GM18951 (cell line): ENCODE measurements at regions of chr9 and their contacts with region 1.

Region 1: DNA sequence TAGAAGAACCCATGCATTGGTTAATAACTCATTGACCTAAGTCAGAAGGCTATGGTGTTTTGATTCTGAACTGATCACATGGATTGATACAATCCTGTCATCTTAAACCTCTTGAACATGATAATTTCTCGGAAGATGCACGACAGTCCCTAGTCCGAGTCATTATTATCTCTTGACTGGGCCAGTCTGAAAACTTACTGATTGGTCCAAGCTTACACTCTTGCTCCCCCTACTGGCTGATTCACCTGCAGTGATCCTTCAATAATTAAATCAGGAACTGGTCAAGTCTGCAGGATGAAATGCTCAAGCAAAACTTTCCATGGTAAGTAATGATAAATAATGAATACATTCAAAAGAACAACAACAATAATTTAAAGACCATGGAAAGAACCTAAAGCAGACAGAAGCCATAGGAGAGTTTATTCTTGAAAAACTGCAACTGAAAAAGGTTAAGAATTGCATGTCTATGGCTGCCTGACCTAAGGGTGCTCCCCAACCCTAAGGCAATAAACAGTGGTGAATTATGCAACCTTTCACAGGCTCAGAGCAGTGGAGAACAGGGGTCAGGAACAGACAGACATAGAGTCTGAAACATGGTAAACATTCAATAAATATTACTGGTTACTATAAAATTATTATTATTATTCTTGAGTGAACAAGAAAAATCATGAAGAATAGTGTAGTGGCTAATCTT is 79.3 kb downstream of the BRINP1 start:
- POLR2A ChIP-seq: no peak

Region 2: DNA sequence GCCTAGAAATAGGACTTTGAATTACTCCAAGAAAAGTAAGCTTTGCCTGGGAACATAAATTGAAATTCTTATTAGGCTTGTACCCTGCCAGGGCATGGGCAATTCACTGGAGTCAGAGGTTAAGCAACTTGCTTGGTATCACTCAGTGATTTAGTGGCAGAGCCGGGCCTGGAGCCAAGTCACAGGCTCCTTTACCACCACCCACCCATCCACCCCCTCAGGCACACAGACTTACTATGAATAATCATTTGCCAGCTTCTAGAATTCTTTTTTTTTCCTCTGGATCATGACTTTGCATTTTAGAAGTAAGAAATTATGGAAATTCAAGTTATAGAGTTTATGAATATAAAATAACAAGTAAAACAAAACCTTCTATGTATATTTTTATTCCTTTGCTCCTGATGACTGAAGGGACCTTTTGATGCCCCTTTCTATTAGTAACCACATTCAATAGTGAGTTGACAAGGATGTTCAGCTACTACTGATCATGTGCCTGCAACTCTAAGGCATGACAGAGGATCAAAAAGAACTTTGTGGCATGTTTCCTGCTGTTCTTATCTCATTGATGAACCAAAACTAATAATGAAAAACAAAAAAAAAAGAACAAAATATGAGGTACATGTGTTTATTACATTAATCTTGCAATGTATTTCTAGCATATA is 971.0 kb before region 1 on chr9:
- in situ Hi-C with region 1: loop called (anchors 25 kb)
- POLR2A ChIP-seq: no peak